ENCODE measurements at regions of chr4 and their contacts with region 1.

Region 1: DNA sequence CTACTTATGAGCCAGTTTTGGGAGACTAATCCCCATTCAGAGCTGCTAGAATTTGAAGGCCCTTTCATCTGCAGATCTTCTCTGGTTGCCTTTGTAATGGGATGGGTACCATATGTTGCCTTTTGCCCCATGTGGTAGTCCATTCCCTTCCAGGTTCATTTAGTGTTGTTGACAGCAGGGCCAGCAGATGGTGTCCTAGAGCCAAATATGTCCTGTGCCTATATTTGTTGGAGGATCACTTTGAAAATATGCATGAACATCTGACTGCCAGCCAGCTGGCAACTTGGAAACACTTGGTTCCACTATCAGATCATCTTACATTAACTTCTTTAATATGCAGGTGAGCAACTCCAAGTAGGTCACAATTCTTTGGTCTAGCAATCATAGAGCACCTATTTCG is 30.4 kb downstream of the CFAP299 start:
- DNase-seq: peak; percentile 41 to 59
- ATAC-seq: peak; percentile 81

Region 2: DNA sequence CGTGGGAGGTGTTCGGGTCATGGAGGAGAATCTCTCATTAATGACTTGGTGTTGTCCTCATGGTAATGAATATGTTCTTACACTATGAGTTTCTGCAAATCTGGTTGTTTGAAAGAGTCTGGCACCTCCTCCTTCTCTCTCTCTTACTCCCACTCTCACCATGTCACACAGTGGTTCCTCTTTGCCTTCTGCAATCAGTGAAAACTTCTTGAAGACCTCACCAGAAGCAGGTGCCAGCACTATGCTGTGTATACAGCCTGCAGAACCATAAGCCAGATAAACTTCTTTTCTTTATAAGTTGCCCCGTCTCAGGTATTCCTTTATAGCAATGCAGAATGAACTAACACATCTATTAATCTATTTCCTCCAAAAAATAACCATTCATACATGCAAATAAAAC is 567.9 kb before region 1 on chr4:
- intact Hi-C with region 1: no loop called
- DNase-seq: no peak
- ATAC-seq: no peak

Region 3: DNA sequence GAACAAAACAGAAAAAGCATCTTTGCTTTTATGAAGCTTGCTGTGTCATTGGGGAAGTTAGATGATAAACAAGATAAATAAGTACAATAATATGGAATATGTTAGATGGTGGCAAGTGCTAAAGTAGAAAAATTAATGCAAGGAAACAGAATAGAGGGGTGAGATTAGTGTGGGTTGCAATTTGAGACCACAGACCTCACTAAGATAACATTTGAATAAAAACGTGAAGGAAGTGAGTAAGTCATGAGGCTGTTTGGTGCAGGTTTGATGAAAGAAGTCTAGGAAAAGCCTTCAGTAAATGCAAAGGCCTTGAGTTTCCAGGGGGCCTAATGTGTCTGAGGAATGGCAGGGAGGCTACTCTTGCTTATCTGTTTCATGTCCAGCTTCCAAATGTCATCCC is 72.1 kb after region 1 on chr4:
- intact Hi-C with region 1: no loop called
- DNase-seq: no peak
- ATAC-seq: no peak

Region 4: GRCh38 chr4:80989921-80990544 is 624.1 kb after region 1 on chr4:
- intact Hi-C with region 1: loop called in 1 of 2 experiments (anchors 5 kb)
- DNase-seq: no peak
- ATAC-seq: peak; percentile 74

Region 5: GRCh38 chr4:81052119-81053068 is 686.5 kb after region 1 on chr4:
- intact Hi-C with region 1: loop called in 1 of 2 experiments (anchors 5 kb)
- DNase-seq: peak; percentile 51 to 79
- ATAC-seq: peak; percentile 82

Region 6: DNA sequence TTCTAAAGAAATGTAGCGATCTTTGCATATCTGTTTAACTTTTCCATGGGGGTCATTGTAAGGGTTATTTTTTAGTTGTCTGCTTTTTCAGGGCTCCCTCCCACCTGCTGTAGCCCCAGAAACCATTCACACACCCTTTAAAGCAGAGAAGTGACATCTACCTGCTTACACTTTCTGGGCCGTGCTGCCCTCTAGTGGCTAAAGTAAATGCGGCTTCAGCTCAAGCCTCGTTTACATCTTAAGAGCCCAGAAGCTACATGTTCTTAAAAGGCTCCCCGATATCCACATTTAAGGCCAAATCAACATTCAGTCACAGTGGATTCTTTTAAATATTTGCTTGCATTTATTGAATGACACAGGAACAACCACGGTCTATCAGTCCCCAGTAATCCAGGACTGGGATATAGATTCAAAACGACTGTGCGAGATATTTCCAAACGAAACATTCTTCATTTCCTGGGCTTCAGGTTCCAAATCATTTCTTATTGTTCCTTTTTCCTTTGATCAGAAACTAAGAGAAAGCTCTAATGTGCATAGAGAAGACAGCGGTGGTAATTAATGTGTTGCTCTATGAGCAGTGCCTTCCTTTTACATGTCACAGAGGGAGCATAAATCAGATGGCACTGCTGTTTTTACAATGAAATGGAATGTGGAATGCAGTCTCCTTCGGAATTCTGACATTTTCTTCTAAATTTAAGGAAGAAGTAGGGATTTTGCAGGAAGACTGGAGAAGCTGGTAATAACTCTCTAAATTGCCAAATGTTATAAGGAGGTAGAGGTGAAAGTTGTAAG is 985.9 kb after region 1 on chr4:
- intact Hi-C with region 1: loop called in 1 of 2 experiments (anchors 10 kb)
- DNase-seq: peak; percentile 40 to 81
- ATAC-seq: peak; percentile 80